Left ventricle myocardium inferior (tissue), 1 donor: ENCODE measurements at regions of chr22 and their contacts with region 1.

Region 1: GRCh38 chr22:40024201-40025061 is 29.7 kb downstream of the FAM83F start:
- DNase-seq: peak; percentile 63
- H3K4me3 ChIP-seq: no peak overlapping the region
- H3K27ac ChIP-seq: no peak overlapping the region
- H3K4me1 ChIP-seq: peaks cover 8% of the 10 kb centered on the region
- H3K27me3 ChIP-seq: peaks cover 21% of the 10 kb centered on the region
- CTCF ChIP-seq: peak; percentile 91

Region 2: GRCh38 chr22:39534591-39535356 is 489.7 kb before region 1 on chr22:
- intact Hi-C with region 1: loop called (anchors 5 kb)
- DNase-seq: peak; percentile 85
- H3K4me3 ChIP-seq: peak overlapping the region; percentile 17
- H3K27ac ChIP-seq: peak overlapping the region; percentile 27
- H3K4me1 ChIP-seq: peaks cover 39% of the 10 kb centered on the region
- H3K27me3 ChIP-seq: no peaks in the 10 kb centered on the region
- CTCF ChIP-seq: peak; percentile 94

Region 3: GRCh38 chr22:39908737-39909136 is 115.7 kb before region 1 on chr22:
- intact Hi-C with region 1: no loop called
- DNase-seq: no peak
- H3K4me3 ChIP-seq: no peak overlapping the region
- H3K27ac ChIP-seq: no peak overlapping the region
- H3K4me1 ChIP-seq: no peaks in the 10 kb centered on the region
- H3K27me3 ChIP-seq: peaks cover 75% of the 10 kb centered on the region
- CTCF ChIP-seq: no peak

Region 4: GRCh38 chr22:40147388-40148176 is 123.2 kb after region 1 on chr22:
- intact Hi-C with region 1: no loop called
- DNase-seq: no peak
- H3K4me3 ChIP-seq: no peak overlapping the region
- H3K27ac ChIP-seq: no peak overlapping the region
- H3K4me1 ChIP-seq: no peaks in the 10 kb centered on the region
- H3K27me3 ChIP-seq: no peaks in the 10 kb centered on the region
- CTCF ChIP-seq: no peak